ENCODE measurements at regions of chr16 and their contacts with region 1.

Region 1: GRCh38 chr16:22206013-22206841 is at the start of gene EEF2K:
- DNase-seq: peak; percentile 94
- H3K4me3 ChIP-seq: peak within 1 kb of the TSS; percentile 94
- H3K27ac ChIP-seq: peak within 1 kb of the TSS; percentile 84
- H3K4me1 ChIP-seq: peaks cover 56% of the 10 kb centered on the region
- CTCF ChIP-seq: peak; percentile 76
- total RNA-seq, gene EEF2K: 17.6 and 23.8 TPM in 2 replicates

Region 2: DNA sequence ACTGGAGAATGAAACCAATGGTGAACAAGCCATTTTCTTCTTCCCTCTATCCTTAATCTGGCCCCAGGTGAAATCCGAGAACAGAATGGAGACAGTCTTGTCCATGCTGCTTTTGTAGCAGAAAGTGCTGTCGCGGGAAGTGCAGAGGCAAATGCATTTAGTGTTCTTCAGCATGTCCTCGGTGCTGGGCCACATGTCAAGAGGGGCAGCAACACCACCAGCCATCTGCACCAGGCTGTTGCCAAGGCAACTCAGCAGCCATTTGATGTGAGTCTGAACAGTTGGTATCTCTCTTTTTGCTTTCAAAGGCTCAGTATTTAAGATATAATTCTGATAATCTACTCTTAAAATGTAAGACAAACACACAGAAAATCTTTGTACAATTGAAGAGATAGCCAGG is 234.4 kb before region 1 on chr16:
- CTCF ChIA-PET with region 1: no interaction called
- POLR2A ChIA-PET with region 1: no interaction called
- intact Hi-C with region 1: no loop called
- DNase-seq: no peak
- H3K4me3 ChIP-seq: no peak overlapping the region
- H3K27ac ChIP-seq: no peak overlapping the region
- H3K4me1 ChIP-seq: no peaks in the 10 kb centered on the region
- CTCF ChIP-seq: no peak

Region 3: DNA sequence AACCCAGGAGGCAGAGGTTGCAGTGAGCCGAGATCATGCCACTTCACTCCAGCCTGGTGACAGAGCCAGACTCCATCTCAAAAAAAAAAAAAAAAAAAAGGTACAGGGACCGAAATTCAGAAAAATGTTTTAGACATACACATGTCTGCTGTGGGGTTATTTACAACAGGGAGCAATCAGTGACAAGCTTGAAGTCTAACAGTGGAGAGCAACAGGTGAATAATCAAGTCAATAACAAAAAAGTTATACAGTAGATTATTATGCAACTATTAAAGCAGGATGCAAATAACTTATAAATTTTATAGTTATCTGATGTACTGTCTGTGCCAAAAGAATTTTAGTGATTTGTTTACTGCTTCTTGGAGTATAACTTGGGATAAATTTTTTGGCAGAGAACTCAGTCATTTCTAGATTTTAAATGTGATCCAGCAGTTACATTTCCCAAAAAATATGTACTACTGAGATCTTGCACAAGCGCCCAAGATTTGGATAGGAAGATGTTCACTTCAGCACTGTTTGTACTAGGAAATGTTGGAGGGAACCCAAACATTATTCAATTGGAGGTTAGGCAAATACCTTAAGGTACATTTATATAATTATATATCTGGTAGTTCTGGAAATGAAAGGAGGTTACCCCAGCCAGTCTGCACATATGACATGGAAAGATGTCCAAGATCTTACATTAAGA is 33.9 kb after region 1 on chr16:
- CTCF ChIA-PET with region 1: no interaction called
- POLR2A ChIA-PET with region 1: interaction called, 3 read pairs
- intact Hi-C with region 1: loop called (anchors 5 kb)
- DNase-seq: no peak
- H3K4me3 ChIP-seq: no peak overlapping the region
- H3K27ac ChIP-seq: peak overlapping the region; percentile 46
- H3K4me1 ChIP-seq: peaks cover 16% of the 10 kb centered on the region
- CTCF ChIP-seq: no peak

Region 4: DNA sequence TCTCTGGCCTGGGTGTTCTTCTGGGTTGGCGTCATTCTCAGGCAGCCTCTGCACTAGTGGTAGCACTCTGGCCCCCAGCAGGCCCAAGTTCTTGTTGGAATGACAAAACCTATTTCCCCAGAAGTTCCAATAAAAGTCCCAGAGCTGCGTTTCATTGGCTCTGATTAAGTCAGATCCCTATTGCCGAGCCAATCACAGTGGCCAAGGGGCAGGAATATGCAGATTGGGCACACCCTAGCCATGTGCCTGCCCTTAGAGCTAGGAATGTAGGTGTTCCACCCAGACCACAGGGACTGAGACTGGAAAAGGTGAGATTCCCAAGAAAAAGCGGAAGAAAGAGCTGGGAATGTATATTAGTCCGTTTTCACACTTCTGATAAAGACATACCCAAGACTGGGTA is 46.1 kb after region 1 on chr16:
- CTCF ChIA-PET with region 1: interaction called, 21 read pairs
- POLR2A ChIA-PET with region 1: no interaction called
- intact Hi-C with region 1: no loop called
- DNase-seq: no peak
- H3K4me3 ChIP-seq: no peak overlapping the region
- H3K27ac ChIP-seq: no peak overlapping the region
- H3K4me1 ChIP-seq: no peaks in the 10 kb centered on the region
- CTCF ChIP-seq: no peak

Region 5: DNA sequence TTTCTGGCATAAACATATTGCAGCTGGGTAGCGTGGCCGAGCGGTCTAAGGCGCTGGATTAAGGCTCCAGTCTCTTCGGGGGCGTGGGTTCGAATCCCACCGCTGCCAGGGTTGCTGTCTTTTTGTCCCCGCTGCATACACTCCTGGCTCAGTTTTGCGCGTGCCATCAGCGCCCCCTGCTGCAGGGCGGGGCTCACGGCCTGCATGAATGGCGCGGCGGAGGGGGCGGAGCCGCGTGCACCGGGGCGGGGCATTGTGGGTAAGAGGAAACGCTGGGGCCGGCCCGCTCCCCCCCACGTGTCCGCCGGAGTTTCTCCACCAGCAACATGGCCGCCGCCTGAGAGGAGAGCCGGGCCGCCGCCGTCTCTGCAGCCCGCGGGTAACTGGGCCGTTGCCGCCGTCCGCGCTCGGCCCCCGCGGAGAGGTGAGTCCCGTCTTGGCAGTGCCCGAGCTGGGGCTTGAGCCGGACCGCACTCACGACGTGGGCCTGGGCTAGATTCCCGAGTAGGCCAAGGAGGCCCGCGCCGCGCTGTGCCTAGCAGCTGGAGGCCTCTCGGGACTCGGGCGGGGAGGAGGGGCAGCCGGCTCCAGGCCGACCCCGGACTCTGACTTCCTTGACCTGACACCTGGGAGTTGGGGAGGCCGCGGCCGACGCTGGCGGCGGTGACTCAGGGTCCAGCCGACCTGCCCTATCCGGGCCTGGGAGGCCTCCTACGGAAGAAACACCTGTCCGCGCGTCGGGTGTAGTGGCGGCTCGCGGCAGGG is 91.1 kb after region 1 on chr16 and contains the start of gene POLR3E:
- CTCF ChIA-PET with region 1: interaction called, 4 read pairs
- POLR2A ChIA-PET with region 1: interaction called, 4 read pairs
- intact Hi-C with region 1: loop called (anchors 1 kb)
- DNase-seq: peak; percentile 97
- H3K4me3 ChIP-seq: peak within 1 kb of the TSS; percentile 95
- H3K27ac ChIP-seq: peak within 1 kb of the TSS; percentile 74
- H3K4me1 ChIP-seq: peaks cover 25% of the 10 kb centered on the region
- CTCF ChIP-seq: peak; percentile 84
- total RNA-seq, gene POLR3E: 71.1 and 74.5 TPM in 2 replicates

Region 6: GRCh38 chr16:22374311-22375116 is 168.3 kb after region 1 on chr16 and contains the start of gene CDR2:
- CTCF ChIA-PET with region 1: interaction called, 4 read pairs
- POLR2A ChIA-PET with region 1: no interaction called
- intact Hi-C with region 1: loop called (anchors 5 kb)
- DNase-seq: peak; percentile 99
- H3K4me3 ChIP-seq: peak within 1 kb of the TSS; percentile 75
- H3K27ac ChIP-seq: peak within 1 kb of the TSS; percentile 67
- H3K4me1 ChIP-seq: peaks cover 41% of the 10 kb centered on the region
- CTCF ChIP-seq: no peak
- total RNA-seq, gene CDR2: 33.0 and 62.5 TPM in 2 replicates